ENCODE measurements at regions of chr11 and their contacts with region 1.

Region 1: GRCh38 chr11:78645226-78646202 is 70.8 kb upstream of the NARS2 start:
- DNase-seq: peak; percentile 48
- H3K4me3 ChIP-seq: no peak overlapping the region
- H3K27ac ChIP-seq: no peak overlapping the region
- H3K27me3 ChIP-seq: no peaks in the 10 kb centered on the region
- CTCF ChIP-seq: peak; percentile 95

Region 2: GRCh38 chr11:78676026-78676557 is 30.6 kb after region 1 on chr11:
- CTCF ChIA-PET with region 1: interaction called, 12 read pairs
- POLR2A ChIA-PET with region 1: no interaction called
- DNase-seq: no peak
- H3K4me3 ChIP-seq: no peak overlapping the region
- H3K27ac ChIP-seq: no peak overlapping the region
- H3K27me3 ChIP-seq: no peaks in the 10 kb centered on the region
- CTCF ChIP-seq: no peak

Region 3: GRCh38 chr11:78753297-78753696 is 107.8 kb after region 1 on chr11:
- CTCF ChIA-PET with region 1: no interaction called
- POLR2A ChIA-PET with region 1: no interaction called
- DNase-seq: no peak
- H3K4me3 ChIP-seq: no peak overlapping the region
- H3K27ac ChIP-seq: no peak overlapping the region
- H3K27me3 ChIP-seq: peaks cover 2% of the 10 kb centered on the region
- CTCF ChIP-seq: no peak

Region 4: GRCh38 chr11:78812513-78813293 is 167.2 kb after region 1 on chr11:
- CTCF ChIA-PET with region 1: interaction called, 24 read pairs
- POLR2A ChIA-PET with region 1: no interaction called
- DNase-seq: no peak
- H3K4me3 ChIP-seq: no peak overlapping the region
- H3K27ac ChIP-seq: peak overlapping the region; percentile 13
- H3K27me3 ChIP-seq: no peaks in the 10 kb centered on the region
- CTCF ChIP-seq: peak; percentile 33

Region 5: GRCh38 chr11:78973876-78974275 is 328.4 kb after region 1 on chr11:
- CTCF ChIA-PET with region 1: interaction called, 14 read pairs
- POLR2A ChIA-PET with region 1: no interaction called
- DNase-seq: no peak
- H3K4me3 ChIP-seq: no peak overlapping the region
- H3K27ac ChIP-seq: no peak overlapping the region
- H3K27me3 ChIP-seq: peaks cover 3% of the 10 kb centered on the region
- CTCF ChIP-seq: no peak

Region 6: DNA sequence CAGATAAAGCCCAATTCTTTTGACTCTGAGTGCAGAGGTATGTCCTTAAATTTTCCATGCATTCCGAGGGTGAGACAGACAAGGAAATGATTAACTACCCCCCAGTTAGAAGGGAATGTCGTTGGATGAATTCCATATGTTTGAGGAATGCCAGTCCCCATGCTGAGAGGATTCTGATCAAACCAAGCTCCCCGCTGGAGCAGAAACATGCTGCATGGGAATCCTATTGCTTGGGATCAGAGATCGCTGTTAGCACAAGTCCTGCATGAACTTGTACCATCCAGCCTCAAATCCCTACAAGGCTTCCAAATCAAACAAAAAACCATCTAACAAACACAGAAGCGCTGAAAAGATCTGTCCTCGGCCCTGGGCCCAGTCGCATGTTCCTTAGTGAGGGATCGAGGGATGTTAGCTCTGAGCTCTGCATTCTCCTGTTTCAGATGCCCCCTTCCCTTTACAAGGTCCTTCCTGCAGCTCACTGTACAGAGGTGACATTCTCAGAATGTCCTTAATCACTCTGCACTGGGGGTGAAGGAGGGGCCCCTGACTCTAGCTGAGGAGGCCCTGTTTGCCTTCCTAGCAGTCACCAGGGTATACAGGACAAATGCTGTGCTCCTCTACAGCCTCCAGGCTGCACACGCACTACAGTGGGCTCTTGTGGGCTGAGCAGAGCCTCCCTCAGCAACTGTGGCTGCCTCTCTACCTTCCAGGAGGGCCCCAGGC is 441.9 kb after region 1 on chr11:
- CTCF ChIA-PET with region 1: interaction called, 19 read pairs
- POLR2A ChIA-PET with region 1: no interaction called
- DNase-seq: no peak
- H3K4me3 ChIP-seq: no peak overlapping the region
- H3K27ac ChIP-seq: peak overlapping the region; percentile 42
- H3K27me3 ChIP-seq: no peaks in the 10 kb centered on the region
- CTCF ChIP-seq: no peak

Region 7: DNA sequence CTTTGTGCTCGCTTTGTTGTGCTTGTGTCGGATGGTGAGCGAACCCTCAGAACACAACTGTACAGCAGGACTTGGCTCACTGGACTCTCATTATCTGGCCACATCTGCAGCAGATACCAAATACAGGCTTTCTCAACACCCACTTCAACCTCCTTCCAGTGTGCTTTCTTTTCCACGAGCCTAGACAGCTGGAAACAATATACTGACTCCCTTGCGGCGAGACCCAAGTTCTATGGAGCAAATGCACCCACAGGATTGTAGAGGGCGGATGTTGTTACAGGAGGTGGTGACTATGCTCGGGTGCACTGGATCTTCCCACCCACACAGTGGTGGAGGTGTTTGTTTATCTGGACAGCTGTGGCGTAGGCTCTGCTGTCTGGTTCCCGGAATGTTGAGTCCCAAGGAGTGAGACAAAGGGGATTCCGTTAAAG is 591.0 kb after region 1 on chr11:
- CTCF ChIA-PET with region 1: interaction called, 11 read pairs
- POLR2A ChIA-PET with region 1: no interaction called
- DNase-seq: peak; percentile 98
- H3K4me3 ChIP-seq: peak overlapping the region; percentile 3; the same call in 1 of the 2 replicates
- H3K27ac ChIP-seq: peak overlapping the region; percentile 97
- H3K27me3 ChIP-seq: no peaks in the 10 kb centered on the region
- CTCF ChIP-seq: no peak

Region 8: DNA sequence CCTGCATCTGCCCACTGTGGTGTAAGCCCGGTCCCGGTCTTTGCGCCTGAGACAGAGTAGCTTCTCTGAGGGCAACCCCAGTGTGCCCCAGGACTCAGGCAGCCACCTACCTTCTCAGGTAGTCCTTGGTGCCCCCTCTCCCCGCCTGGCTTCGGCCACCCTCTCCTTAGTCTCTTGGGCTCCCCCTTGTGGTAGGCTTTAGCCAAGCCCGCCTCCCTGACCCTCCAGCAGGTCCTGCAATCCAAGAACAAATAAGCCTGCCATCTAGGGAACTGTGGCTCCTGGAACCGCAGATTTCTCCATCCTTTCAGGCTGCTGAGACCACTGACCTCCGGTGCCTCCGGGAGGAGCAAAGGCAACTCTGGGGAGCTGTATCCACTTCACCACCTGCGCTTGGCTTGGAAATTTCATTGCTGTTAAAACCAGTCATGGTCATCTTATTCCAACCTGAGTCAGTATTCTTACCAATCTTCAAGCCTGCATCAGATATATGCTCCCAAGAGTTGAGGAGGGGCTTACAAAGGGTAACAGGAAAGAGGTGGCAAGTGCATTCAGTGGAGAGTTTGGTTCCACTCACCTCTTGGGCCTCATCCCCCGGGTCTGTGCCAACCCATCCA is 848.1 kb after region 1 on chr11:
- CTCF ChIA-PET with region 1: interaction called, 74 read pairs
- POLR2A ChIA-PET with region 1: no interaction called
- DNase-seq: peak; percentile 37
- H3K4me3 ChIP-seq: no peak overlapping the region
- H3K27ac ChIP-seq: no peak overlapping the region
- H3K27me3 ChIP-seq: peaks cover 22% of the 10 kb centered on the region
- CTCF ChIP-seq: peak; percentile 92